ENCODE measurements at regions of chr3 and their contacts with region 1.

Region 1: DNA sequence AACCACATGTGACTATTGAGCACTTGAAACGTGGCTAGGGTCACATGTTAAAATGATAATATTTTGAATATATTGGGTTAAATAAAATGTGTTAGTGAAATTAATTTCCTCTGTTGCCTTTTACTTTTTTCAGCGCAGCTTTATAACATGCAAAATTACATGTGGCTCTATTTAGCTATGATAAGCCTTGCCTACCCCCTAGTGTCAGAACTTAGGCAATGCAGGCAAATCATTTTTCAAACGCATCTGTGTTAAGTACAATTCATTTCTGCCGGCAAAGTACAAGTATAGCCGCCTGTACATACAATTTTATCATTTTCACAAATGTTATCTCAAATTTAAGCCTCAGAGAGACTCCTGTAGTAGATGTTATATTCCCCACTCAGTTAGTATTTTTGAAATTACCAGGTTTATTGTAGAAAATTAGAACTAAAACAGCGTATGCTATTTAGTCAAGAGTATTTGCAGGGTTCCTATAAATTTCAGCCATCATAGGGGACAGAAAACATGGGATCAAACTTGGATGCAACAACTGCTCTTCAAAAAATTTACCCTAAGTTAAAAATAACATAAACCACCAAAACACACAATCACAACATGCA is 56.1 kb downstream of the TAFA4 start:
- DNase-seq: peak; percentile 31
- ATAC-seq: peak; percentile 76
- H3K4me3 ChIP-seq: no peak overlapping the region
- H3K27ac ChIP-seq: no peak overlapping the region
- H3K4me1 ChIP-seq: no peaks in the 10 kb centered on the region
- H3K27me3 ChIP-seq: peaks cover 0 to 3% of the 10 kb centered on the region in 2 experiments; a peak in 1 of 5 replicates
- CTCF ChIP-seq: peak; percentile 80
- EP300 ChIP-seq: no peak
- POLR2A ChIP-seq: no peak
- RAD21 ChIP-seq: 0 out of 2 replicates have a peak, but pooled peaks have one; percentile 50

Region 2: DNA sequence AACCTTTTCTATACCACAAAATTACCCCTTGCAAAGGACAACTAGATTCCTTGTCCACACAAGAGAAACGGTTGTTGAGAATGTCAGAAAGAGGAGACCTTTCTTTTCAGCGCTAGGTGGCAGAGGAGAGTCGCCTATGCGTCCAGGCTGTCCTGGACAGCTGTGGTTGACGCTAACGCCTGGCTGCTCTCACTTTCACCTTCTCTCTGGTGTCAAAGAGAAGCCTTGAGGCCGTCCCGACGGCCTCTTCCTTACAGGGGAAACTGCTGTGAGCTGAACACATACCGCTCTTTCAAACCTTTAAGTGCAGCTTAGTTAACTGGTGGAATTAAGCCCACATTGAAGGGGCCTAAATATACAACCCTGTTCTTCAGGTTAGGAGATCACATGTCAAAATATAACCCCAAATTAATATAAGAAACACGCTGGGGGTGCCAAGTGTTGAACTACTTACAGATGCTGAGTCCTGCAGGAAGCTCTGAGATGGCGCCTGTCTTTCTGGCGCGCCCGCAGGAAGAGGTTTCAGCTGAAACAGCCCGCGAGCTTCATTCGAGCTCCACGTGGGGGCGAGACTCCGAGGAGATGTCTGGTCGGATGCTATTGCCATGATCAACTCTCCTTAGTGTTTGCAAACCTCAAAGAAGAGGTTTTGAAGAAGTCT is 1904.2 kb before region 1 on chr3:
- CTCF ChIA-PET with region 1: interaction called, 6 read pairs
- POLR2A ChIA-PET with region 1: no interaction called
- in situ Hi-C with region 1: loop called (anchors 25 kb)
- intact Hi-C with region 1: loop called (anchors 5 kb)
- DNase-seq: peak; percentile 60
- ATAC-seq: peak; percentile 100
- H3K4me3 ChIP-seq: peak overlapping the region; percentile 26 to 64 (median 27); a peak in 3 of 6 replicates
- H3K27ac ChIP-seq: no peak overlapping the region
- H3K4me1 ChIP-seq: peaks cover 8% of the 10 kb centered on the region; the same call in 1 of the 2 replicates
- H3K27me3 ChIP-seq: peaks cover 0 to 12% of the 10 kb centered on the region in 2 experiments; a peak in 3 of 5 replicates
- CTCF ChIP-seq: peak; percentile 87
- EP300 ChIP-seq: no peak
- POLR2A ChIP-seq: no peak
- RAD21 ChIP-seq: peak; percentile 57; the same call in 1 of the 2 replicates

Region 3: DNA sequence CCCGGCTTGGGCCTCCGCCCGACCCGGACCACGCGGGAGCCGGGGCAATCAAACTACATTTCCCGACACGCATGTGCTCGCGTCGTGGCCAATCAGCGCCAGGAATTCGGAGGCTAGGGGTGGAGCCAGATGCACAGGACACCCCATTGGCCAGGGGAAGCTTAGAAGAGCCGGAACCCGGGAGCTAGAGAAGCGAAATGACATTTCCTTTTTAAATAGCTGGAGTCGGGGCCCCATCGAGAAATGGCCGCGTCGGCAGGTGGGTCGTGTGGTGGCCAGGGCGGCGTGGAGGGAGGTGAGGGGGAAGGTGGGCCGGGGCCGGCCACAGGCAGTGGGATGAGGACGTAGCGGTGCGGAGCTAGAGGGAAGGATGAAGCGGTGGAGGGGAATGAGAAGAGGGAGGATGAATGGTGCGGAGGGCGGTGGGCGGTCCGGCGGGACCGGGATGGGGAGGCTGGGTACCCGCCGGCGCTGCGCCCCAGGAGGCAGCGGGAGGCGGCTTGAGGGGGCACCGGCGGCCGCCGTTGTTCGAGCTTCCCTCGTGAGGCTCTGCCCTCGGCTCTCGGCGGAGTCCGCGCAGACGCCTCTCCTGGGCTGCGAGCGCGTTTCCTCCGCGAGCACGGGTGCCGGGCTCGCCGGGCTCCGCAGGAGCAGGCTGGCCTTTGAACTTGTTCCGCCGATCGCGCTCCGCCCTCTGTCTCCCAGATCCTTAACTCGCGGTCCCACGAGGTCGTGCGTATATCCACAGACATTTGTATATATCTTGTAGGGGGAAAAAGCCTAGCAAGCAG is 1877.9 kb before region 1 on chr3 and contains the start of gene KBTBD8:
- CTCF ChIA-PET with region 1: no interaction called
- POLR2A ChIA-PET with region 1: no interaction called
- in situ Hi-C with region 1: loop called (anchors 25 kb)
- intact Hi-C with region 1: no loop called
- DNase-seq: peak; percentile 97
- ATAC-seq: peak; percentile 99
- H3K4me3 ChIP-seq: peak within 1 kb of the TSS; percentile 69 to 98 (median 83)
- H3K27ac ChIP-seq: peak within 1 kb of the TSS; percentile 11
- H3K4me1 ChIP-seq: 0 out of 2 replicates have a peak, but pooled peaks cover 5% of the 10 kb centered on the region
- H3K27me3 ChIP-seq: no peaks in the 10 kb centered on the region
- CTCF ChIP-seq: no peak
- EP300 ChIP-seq: no peak
- POLR2A ChIP-seq: 0 out of 4 replicates have a peak, but pooled peaks of 1 of the 2 experiments have one; percentile 21
- RAD21 ChIP-seq: no peak
- total RNA-seq, gene KBTBD8: 7.6 and 16.2 TPM in 2 replicates

Region 4: DNA sequence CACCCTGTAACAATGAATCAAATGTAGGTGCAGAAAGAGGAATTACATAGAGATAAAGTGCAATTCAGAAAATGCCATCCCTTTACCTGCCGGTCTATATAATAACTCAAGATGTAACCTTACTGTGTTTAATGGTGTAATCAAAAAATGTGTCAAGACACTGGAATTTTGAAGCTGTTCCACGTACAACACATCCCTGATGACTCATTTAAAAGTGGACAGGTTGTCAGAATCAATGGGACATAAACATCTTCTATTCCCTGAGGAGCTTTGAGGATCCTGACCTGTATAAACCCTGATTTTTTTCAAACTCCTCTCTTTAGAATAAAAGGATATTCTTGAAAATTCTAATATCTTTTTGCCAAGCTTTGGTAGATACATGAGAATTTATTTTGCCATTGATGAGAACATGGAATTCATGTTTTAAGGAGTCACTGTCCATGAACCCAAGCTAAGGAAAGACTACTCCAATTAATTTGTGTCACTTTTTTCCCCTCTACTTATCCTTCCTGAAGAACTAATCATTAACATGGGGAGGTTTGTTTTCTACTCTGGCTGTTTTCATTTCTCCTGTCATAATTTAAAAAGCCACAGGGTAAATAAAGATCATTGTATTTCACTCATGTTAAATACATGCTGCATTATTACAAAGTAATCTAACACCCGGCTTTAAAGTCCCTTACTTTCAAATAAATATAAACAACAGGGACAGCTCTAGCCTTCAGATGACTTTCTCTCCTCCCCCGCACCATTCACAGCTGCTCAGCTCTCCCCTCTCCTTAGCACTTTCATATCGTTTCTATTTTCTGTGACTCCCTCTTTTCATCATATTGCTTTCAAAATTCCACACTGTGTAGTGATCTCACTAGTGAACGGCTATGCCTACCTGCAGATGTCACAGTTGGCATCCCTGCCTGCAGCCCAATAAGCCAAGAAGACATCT is 82.2 kb before region 1 on chr3:
- CTCF ChIA-PET with region 1: no interaction called
- POLR2A ChIA-PET with region 1: no interaction called
- in situ Hi-C with region 1: no loop called
- intact Hi-C with region 1: no loop called
- DNase-seq: no peak
- ATAC-seq: no peak
- H3K4me3 ChIP-seq: no peak overlapping the region
- H3K27ac ChIP-seq: no peak overlapping the region
- H3K4me1 ChIP-seq: no peaks in the 10 kb centered on the region
- H3K27me3 ChIP-seq: no peaks in the 10 kb centered on the region
- CTCF ChIP-seq: no peak
- EP300 ChIP-seq: no peak
- POLR2A ChIP-seq: no peak
- RAD21 ChIP-seq: no peak

Measured in HepG2 (cell line).